Panc1 (cell line): ENCODE measurements at regions of chr6 and their contacts with region 1.

Region 1: DNA sequence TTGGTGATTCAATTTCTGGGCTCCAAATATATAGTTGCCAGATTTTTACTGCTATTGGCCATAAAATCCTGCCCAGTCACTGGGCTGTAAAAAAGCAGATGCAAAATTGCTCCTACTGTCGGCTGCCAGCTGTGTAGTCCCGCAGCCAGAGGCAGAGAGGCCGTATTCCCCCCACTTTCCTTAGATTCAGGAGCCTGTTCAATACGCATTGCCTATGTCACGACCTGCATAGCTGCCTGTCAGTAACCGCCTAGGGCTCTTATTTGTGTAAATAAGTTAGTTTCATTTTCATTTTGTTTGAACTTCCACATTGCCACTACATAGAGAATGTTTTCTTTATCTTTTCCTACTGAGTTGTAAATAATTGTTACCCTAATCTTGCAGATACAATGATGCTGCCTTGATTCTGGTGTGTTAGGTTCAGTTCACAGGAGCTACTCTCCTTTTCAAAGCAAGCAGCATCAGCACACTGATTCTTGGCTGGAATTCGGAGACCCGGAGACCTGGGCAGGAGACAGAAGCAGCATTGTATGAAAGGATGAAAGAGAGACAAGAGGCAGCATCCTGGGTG is 46.0 kb upstream of the UST start:
- DNase-seq: no peak
- ATAC-seq: peak; percentile 65; the same call in 1 of the 2 replicates
- H3K4me3 ChIP-seq: peak overlapping the region; percentile 32 to 48
- H3K27ac ChIP-seq: no peak overlapping the region
- H3K4me1 ChIP-seq: 0 out of 2 replicates have a peak, but pooled peaks cover 2% of the 10 kb centered on the region
- H3K27me3 ChIP-seq: no peaks in the 10 kb centered on the region
- CTCF ChIP-seq: no peak

Region 2: DNA sequence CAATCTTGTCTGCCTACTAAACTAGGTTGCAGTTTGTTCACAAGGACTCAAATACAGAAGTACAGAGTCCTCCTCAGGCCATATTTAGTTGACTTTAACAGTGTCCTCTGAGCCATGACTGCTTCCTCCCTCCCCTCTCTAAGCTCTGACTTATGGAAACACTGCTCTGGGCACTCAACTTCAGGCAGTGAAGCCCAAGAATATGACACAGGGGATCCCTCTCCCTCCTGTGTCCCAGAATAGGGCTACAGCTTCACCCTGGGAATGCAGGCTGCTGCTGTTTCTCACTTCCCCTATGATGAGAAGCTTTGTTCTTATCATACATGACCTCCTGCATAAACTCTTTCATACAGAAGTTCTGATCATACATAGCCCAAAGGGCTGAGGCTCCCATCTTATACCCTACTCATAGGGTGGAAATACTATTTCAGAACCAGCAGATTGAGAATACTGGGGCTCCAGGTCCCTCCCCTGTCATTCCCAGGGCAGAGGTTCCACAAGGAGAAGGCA is 51.3 kb before region 1 on chr6:
- CTCF ChIA-PET with region 1: no interaction called
- POLR2A ChIA-PET with region 1: no interaction called
- in situ Hi-C with region 1: no loop called
- intact Hi-C with region 1: loop called (anchors 1 kb)
- DNase-seq: no peak
- ATAC-seq: no peak
- H3K4me3 ChIP-seq: no peak overlapping the region
- H3K27ac ChIP-seq: no peak overlapping the region
- H3K4me1 ChIP-seq: no peaks in the 10 kb centered on the region
- H3K27me3 ChIP-seq: no peaks in the 10 kb centered on the region
- CTCF ChIP-seq: no peak